ENCODE measurements at regions of chr9 and their contacts with region 1.

Region 1: DNA sequence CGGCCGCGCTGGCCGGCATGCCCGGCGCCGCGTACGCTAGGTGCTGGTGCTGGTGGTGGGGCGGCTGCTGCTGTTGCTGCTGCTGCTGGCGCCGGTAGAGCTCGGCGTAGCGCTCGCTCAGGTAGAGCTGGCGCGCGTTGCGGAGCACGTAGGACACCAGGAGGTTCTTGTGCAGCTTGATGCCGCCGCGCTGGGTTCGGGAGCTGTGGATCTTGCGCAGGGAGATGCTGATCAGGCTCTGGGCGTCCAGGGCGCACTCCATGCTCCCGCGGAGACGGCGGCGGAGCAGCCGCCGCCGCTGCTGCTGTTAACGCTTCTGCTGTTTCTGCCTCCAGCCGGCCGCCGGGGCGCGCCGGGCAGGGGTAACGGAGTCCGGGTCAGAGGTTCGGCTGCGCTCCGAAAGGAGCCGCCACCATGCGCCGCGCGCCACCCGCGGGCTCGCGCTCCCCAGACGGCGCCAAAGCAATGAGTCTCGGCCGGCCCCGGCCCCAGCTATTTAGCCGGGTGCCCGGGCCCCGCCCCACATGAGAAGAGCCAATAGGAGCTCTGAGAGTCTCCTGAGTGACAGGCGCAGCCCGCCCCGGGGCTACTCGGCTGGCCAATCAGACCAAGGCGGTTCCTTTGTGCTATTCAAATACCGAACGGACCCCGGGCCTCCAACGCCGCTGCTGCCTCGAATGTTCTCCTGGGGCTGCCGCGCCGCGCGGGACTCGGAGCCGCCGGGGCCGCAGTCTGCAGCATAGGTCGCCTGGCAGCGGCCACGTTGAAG is at the start of gene IER5L:
- DNase-seq: peak; percentile 91
- ATAC-seq: peak; percentile 71
- H3K4me3 ChIP-seq: peak within 1 kb of the TSS; percentile 79 to 92
- H3K27ac ChIP-seq: peak within 1 kb of the TSS; percentile 98
- H3K4me1 ChIP-seq: peaks cover 56 to 80% of the 10 kb centered on the region in 2 experiments
- H3K27me3 ChIP-seq: no peaks in the 10 kb centered on the region
- CTCF ChIP-seq: no peak
- POLR2A ChIP-seq: peak; percentile 99
- RAD21 ChIP-seq: no peak
- total RNA-seq, gene IER5L: 195 TPM

Region 2: GRCh38 chr9:128829477-128830251 is 348.3 kb before region 1 on chr9 and contains the start of gene SPOUT1:
- CTCF ChIA-PET with region 1: no interaction called
- POLR2A ChIA-PET with region 1: no interaction called
- RAD21 ChIA-PET with region 1: no interaction called
- intact Hi-C with region 1: no loop called
- DNase-seq: peak; percentile 81
- ATAC-seq: peak; percentile 94
- H3K4me3 ChIP-seq: peak within 1 kb of the TSS; percentile 95 to 97
- H3K27ac ChIP-seq: peak within 1 kb of the TSS; percentile 78
- H3K4me1 ChIP-seq: peaks cover 11 to 17% of the 10 kb centered on the region in 2 experiments
- H3K27me3 ChIP-seq: no peaks in the 10 kb centered on the region
- CTCF ChIP-seq: no peak
- POLR2A ChIP-seq: peak; percentile 80
- RAD21 ChIP-seq: no peak
- total RNA-seq, gene SPOUT1: 70.4 TPM

Region 3: DNA sequence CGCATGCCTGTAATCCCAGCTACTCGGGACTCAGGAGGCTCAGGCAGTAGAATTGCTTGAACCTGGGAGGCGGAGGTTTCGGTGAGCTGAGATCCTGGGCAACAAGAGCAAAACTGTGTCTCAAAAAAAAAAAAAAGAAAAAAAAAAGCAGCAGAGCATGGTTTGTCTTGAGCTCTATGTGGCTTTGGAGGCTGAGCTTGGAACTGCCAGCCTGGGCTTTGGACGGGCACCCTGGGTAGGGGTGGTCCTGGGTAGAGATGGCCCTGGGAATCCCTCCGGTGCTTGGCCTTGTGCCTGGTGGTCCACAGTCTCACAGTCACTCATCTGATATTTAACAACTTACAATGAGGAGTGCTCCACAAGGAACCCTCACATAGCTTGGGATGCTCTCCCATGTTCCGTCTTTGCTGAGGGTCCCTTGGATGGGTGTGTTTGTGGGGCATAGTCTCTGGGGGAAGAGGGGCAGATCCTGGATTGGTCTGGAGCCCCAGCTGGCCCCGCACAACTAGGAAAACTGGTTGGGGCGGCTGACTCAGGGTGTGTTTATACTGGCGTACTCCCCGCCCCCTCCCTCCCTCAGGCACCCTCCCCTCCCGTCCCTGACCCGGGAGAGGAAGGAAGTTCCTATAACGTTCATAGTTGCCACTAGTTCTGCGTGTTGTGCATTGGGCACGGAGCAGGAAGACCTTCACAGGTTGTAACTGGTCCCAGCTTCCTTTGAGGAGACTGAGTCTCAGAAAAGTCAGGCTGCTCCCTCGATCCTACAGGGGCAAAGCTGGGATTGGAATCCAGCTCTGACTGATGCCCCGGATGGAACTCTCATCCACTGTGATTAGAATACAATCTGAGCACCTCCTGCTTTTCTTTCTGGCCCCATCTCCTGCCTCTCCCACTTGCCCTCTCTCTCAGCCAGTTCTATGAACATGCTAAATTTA is 11.1 kb before region 1 on chr9:
- CTCF ChIA-PET with region 1: interaction called, 5 read pairs
- POLR2A ChIA-PET with region 1: interaction called, 24 read pairs
- RAD21 ChIA-PET with region 1: no interaction called
- intact Hi-C with region 1: no loop called
- DNase-seq: peak; percentile 63
- ATAC-seq: peak; percentile 75
- H3K4me3 ChIP-seq: peak overlapping the region; percentile 56 to 57
- H3K27ac ChIP-seq: peak overlapping the region; percentile 91
- H3K4me1 ChIP-seq: peaks cover 75 to 86% of the 10 kb centered on the region in 2 experiments
- H3K27me3 ChIP-seq: no peaks in the 10 kb centered on the region
- CTCF ChIP-seq: no peak
- POLR2A ChIP-seq: no peak
- RAD21 ChIP-seq: no peak

Region 4: GRCh38 chr9:129213551-129213950 is 35.6 kb after region 1 on chr9:
- CTCF ChIA-PET with region 1: no interaction called
- POLR2A ChIA-PET with region 1: no interaction called
- RAD21 ChIA-PET with region 1: no interaction called
- intact Hi-C with region 1: no loop called
- DNase-seq: no peak
- ATAC-seq: no peak
- H3K4me3 ChIP-seq: no peak overlapping the region
- H3K27ac ChIP-seq: no peak overlapping the region
- H3K4me1 ChIP-seq: peaks cover 0 to 4% of the 10 kb centered on the region in 2 experiments; a peak in 2 of 4 replicates
- H3K27me3 ChIP-seq: no peaks in the 10 kb centered on the region
- CTCF ChIP-seq: no peak
- POLR2A ChIP-seq: no peak
- RAD21 ChIP-seq: no peak

Region 5: DNA sequence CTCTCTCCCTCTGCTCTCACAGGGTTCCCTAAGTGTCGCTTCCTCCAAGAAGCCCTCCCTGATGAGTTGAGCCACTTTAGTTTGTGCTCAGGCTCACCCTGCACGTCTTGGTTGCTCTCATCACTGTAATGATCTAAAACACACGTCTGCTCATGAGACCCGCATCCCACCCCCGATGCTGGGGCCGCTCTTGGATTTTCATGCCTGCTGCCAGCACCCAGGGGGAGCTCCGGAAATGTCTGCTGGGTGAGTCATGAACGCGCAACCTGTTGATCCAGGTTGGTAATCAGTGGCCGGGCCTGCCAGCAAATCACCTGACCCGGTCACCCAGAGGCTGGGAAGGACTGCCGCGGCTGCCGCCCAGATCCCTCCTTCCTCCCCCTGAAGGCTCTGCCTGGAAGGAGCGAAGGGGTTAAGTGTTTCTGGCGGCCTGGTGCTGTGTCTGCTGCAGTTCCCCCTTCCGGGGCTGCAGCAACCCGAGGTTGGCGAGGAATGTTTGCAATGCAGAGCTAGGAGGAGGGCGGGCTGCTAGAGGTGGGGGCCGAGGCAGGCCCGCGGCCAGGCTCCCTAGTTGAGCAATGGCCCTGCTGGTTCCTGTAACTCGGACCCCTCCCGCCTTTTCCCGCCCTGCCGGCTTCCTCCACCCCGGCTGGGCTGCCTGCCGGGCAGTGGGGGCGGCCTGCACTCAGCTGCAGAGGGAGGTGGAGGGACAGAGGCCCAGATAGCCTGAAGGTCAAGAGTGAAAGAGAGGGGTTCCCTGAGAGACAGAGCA is 156.2 kb after region 1 on chr9:
- CTCF ChIA-PET with region 1: no interaction called
- POLR2A ChIA-PET with region 1: interaction called, 28 read pairs
- RAD21 ChIA-PET with region 1: no interaction called
- intact Hi-C with region 1: loop called (anchors 1 kb)
- DNase-seq: peak; percentile 93
- ATAC-seq: peak; percentile 81
- H3K4me3 ChIP-seq: peak overlapping the region; percentile 44 to 52
- H3K27ac ChIP-seq: peak overlapping the region; percentile 100
- H3K4me1 ChIP-seq: peaks cover 54 to 68% of the 10 kb centered on the region in 2 experiments
- H3K27me3 ChIP-seq: no peaks in the 10 kb centered on the region
- CTCF ChIP-seq: no peak
- POLR2A ChIP-seq: peak; percentile 16
- RAD21 ChIP-seq: no peak

Region 6: DNA sequence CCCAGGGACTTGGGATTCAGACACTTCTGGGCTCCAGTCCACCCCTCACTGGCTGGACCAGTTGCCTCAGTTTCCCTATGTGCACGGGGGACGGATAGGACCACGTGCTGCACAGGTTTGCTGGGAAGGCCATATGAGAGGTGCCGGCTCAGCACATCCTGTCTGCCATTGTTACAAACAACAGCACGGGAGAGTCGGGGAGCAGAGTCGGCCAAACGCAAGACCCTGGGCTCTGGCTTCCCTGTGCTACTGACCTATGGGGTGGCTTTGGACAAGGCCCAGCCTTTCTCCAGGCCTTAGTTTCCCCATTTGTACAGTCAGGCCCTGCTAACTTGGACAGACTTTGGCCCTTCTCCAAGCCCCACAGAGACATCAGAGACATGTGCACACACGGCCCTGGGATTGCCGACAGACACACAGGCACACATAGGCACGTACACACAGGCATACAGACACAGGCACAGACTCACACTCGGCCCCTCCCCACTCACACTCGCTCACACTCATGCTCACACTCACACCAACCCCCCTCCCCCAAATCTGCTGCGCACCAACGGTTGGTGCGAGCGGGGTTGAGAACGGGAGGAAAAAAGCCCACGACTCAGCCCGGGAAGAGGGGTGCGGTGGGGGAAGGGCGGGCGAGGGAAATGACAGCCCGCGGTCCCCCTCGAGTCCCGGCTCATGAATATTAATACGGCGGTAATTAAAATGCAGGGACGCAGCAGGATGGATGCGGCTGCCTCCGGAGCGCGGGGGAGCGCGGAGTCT is 309.9 kb after region 1 on chr9:
- CTCF ChIA-PET with region 1: interaction called, 3 read pairs
- POLR2A ChIA-PET with region 1: interaction called, 15 read pairs
- RAD21 ChIA-PET with region 1: interaction called in 1 of 2 experiments, 3 read pairs
- intact Hi-C with region 1: loop called (anchors 2 kb)
- DNase-seq: no peak
- ATAC-seq: peak; percentile 18
- H3K4me3 ChIP-seq: peak overlapping the region; percentile 2 to 58
- H3K27ac ChIP-seq: peak overlapping the region; percentile 100
- H3K4me1 ChIP-seq: peaks cover 86 to 100% of the 10 kb centered on the region in 2 experiments
- H3K27me3 ChIP-seq: no peaks in the 10 kb centered on the region
- CTCF ChIP-seq: no peak
- POLR2A ChIP-seq: peak; percentile 41
- RAD21 ChIP-seq: no peak

Region 7: DNA sequence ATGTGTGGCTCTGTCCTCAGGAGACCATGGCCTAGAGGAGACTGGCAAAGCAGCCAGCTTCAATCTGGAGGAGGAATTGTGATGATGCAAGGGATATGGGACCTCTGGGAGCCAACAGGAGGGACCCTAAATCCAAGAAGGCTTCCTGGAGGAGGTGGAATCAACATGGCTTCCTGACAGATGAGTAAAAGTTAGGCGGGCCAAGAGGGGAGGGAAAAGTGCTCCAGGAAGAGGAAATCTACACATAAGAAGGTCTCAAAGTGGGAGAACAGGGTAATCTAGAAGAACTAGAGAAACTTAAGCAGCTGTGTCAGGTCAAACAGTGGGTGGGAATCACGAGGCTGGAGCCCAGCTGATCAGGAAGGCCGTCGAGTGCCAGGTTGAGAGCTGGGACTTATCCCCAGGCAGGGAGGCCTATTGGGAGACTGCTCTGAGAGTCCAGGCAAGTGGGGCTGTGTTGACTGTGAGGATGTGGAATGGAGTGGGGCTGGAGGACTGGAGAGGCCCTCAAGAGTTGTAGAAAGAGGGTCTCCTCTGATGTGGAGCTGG is 323.9 kb after region 1 on chr9:
- CTCF ChIA-PET with region 1: interaction called, 16 read pairs
- POLR2A ChIA-PET with region 1: interaction called, 23 read pairs
- RAD21 ChIA-PET with region 1: interaction called in 1 of 2 experiments, 3 read pairs
- intact Hi-C with region 1: no loop called
- DNase-seq: no peak
- ATAC-seq: no peak
- H3K4me3 ChIP-seq: no peak overlapping the region
- H3K27ac ChIP-seq: peak overlapping the region; percentile 100
- H3K4me1 ChIP-seq: peaks cover 86 to 100% of the 10 kb centered on the region in 2 experiments
- H3K27me3 ChIP-seq: no peaks in the 10 kb centered on the region
- CTCF ChIP-seq: no peak
- POLR2A ChIP-seq: no peak
- RAD21 ChIP-seq: no peak

Region 8: DNA sequence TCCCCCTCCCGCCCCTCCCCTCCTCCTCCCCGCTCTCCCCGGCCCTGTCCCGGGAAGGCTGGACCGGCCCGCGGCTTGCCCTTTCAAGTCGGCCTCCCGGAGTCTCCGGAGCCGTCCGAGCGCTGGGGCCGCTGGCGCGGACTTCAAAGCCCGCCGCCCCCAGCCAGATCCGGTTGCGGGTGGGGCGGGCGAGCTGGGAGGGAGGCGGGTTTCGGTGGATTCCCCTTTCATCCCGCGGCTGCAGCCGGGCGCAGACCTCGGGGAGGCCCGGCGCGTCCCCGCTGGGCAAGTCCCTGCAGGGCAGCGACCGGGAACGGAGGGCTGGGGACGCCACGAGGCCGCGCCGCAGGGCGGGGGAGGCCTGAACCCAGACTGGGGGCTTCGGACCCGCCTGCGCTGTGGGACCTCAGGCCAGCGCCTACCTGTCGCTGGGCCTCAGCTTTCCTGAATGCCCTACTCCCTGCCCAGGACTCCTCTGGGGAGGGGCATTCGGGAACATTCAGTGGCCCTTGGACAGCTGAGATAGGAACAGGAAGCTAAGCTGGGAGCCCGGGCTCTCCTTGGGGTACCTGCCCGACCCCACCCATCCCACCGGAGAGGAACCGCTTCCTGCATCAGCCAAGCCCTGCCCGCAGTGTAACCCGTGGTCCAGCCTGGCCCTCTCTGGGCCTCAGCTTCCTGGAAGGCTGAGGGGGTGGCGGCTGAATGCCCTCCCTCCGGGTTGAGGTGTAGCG is 419.5 kb after region 1 on chr9:
- CTCF ChIA-PET with region 1: no interaction called
- POLR2A ChIA-PET with region 1: interaction called, 10 read pairs
- RAD21 ChIA-PET with region 1: no interaction called
- intact Hi-C with region 1: no loop called
- DNase-seq: peak; percentile 86
- ATAC-seq: peak; percentile 65
- H3K4me3 ChIP-seq: peak overlapping the region; percentile 57 to 67
- H3K27ac ChIP-seq: peak overlapping the region; percentile 98
- H3K4me1 ChIP-seq: peaks cover 82 to 95% of the 10 kb centered on the region in 2 experiments
- H3K27me3 ChIP-seq: no peaks in the 10 kb centered on the region
- CTCF ChIP-seq: no peak
- POLR2A ChIP-seq: no peak
- RAD21 ChIP-seq: no peak

Region 9: GRCh38 chr9:129617167-129617566 is 439.2 kb after region 1 on chr9:
- CTCF ChIA-PET with region 1: no interaction called
- POLR2A ChIA-PET with region 1: interaction called, 6 read pairs
- RAD21 ChIA-PET with region 1: no interaction called
- intact Hi-C with region 1: loop called (anchors 2 kb)
- DNase-seq: no peak
- ATAC-seq: peak; percentile 92
- H3K4me3 ChIP-seq: no peak overlapping the region
- H3K27ac ChIP-seq: no peak overlapping the region
- H3K4me1 ChIP-seq: peaks cover 18 to 45% of the 10 kb centered on the region in 2 experiments
- H3K27me3 ChIP-seq: no peaks in the 10 kb centered on the region
- CTCF ChIP-seq: peak in 2 of 3 experiments; percentile 78 to 82; a peak in 4 of 6 replicates
- POLR2A ChIP-seq: no peak
- RAD21 ChIP-seq: no peak